ENCODE measurements at regions of chr15 and their contacts with region 1.

Region 1: GRCh38 chr15:90954712-90955671 is at the start of gene RCCD1:
- DNase-seq: peak; percentile 64
- H3K4me3 ChIP-seq: peak within 1 kb of the TSS; percentile 86
- CTCF ChIP-seq: no peak

Region 2: GRCh38 chr15:90970274-90970673 is 15.3 kb after region 1 on chr15:
- CTCF ChIA-PET with region 1: interaction called, 169 read pairs
- POLR2A ChIA-PET with region 1: no interaction called
- DNase-seq: no peak
- H3K4me3 ChIP-seq: no peak overlapping the region
- CTCF ChIP-seq: no peak

Region 3: GRCh38 chr15:90994417-90995311 is 39.7 kb after region 1 on chr15 and contains the start of gene PRC1:
- CTCF ChIA-PET with region 1: interaction called, 47 read pairs
- POLR2A ChIA-PET with region 1: interaction called, 5 read pairs
- DNase-seq: peak; percentile 70
- H3K4me3 ChIP-seq: peak within 1 kb of the TSS; percentile 98
- CTCF ChIP-seq: no peak

Region 4: GRCh38 chr15:91032919-91033803 is 78.2 kb after region 1 on chr15:
- CTCF ChIA-PET with region 1: interaction called, 14 read pairs
- POLR2A ChIA-PET with region 1: no interaction called
- DNase-seq: no peak
- H3K4me3 ChIP-seq: no peak overlapping the region
- CTCF ChIP-seq: peak; percentile 68

Region 5: GRCh38 chr15:91055548-91056331 is 100.7 kb after region 1 on chr15:
- CTCF ChIA-PET with region 1: interaction called, 193 read pairs
- POLR2A ChIA-PET with region 1: no interaction called
- DNase-seq: no peak
- H3K4me3 ChIP-seq: no peak overlapping the region
- CTCF ChIP-seq: peak; percentile 80